ENCODE measurements at regions of chr9 and their contacts with region 1.

Region 1: GRCh38 chr9:37309136-37309535 is 113.4 kb upstream of the GRHPR start:
- DNase-seq: peak; percentile 37
- ATAC-seq: peak; percentile 76
- H3K4me3 ChIP-seq: no peak overlapping the region
- H3K27ac ChIP-seq: no peak overlapping the region
- H3K4me1 ChIP-seq: peaks cover 6% of the 10 kb centered on the region
- H3K27me3 ChIP-seq: no peaks in the 10 kb centered on the region
- CTCF ChIP-seq: peak; percentile 40
- POLR2A ChIP-seq: no peak
- RAD21 ChIP-seq: peak; percentile 56

Region 2: DNA sequence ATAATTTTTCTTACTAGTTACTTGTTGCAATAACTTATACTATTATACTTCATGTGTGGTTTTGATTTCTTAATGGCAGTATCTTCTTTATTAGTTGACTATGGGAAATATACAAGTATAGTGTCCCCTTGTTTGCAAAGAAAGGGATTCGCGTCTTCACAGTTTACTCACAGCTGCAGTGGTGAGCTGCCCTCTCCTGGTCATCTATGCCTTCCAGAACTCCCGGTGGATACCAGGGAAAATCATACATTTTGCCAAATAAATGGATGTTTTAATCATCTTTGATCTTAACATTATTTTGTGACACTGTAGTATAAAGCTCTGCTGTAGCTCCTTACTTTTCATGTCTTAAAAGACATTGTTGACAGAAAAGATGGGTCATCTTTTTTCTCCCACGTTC is 46.7 kb before region 1 on chr9:
- CTCF ChIA-PET with region 1: no interaction called
- POLR2A ChIA-PET with region 1: no interaction called
- dilution Hi-C with region 1: no loop called
- in situ Hi-C with region 1: no loop called
- intact Hi-C with region 1: loop called (anchors 5 kb)
- DNase-seq: peak; percentile 49
- ATAC-seq: 0 out of 2 replicates have a peak, but pooled peaks have one; percentile 44
- H3K4me3 ChIP-seq: no peak overlapping the region
- H3K27ac ChIP-seq: no peak overlapping the region
- H3K4me1 ChIP-seq: no peaks in the 10 kb centered on the region
- H3K27me3 ChIP-seq: no peaks in the 10 kb centered on the region
- CTCF ChIP-seq: peak; percentile 57
- POLR2A ChIP-seq: no peak
- RAD21 ChIP-seq: peak; percentile 75

Region 3: DNA sequence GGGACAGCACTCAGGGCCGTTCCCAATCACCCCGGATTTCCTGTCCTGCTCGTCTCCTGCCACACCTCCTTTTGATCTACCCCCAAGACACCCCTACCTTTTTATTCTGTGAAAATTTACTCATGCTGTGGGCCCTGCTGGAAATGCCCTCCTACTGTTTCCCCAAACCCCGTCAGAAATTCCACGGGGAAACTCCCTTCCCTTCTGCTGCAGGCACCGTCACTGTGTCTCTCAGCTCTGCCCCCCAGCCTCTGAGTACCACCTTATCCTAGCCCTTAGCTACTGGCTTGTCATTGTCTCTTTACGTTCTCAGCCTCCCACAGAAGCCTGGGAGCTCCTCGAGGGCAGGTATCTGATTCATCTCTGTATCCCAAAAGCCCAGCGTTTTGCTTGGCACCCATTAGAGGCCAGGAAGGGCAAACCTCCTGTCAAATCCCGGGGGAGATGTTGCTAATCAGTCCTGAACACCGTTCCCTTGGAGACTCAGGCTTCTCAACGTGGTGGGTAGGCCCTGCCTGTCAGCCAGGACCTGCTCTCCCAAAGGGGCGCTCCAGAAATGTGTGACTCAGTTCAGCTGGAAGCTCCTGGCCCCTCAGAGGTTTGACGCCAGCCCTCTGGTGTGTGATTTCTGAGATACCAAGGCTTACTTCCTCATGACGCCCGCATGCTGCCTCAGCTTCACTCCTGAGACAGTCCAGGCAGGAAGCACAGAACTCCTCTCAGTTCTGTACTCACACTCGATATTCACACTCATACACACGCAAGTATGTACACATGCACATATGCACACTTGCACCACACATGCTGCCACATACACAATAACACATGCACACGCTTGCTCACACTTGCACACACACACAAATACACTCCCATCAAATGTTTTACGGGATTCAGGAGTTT is 62.7 kb after region 1 on chr9:
- CTCF ChIA-PET with region 1: no interaction called
- POLR2A ChIA-PET with region 1: no interaction called
- dilution Hi-C with region 1: no loop called
- in situ Hi-C with region 1: loop called (anchors 10 kb)
- intact Hi-C with region 1: no loop called
- DNase-seq: peak; percentile 58
- ATAC-seq: peak; percentile 54
- H3K4me3 ChIP-seq: no peak overlapping the region
- H3K27ac ChIP-seq: no peak overlapping the region
- H3K4me1 ChIP-seq: 0 out of 2 replicates have a peak, but pooled peaks cover 2% of the 10 kb centered on the region
- H3K27me3 ChIP-seq: peaks cover 9% of the 10 kb centered on the region
- CTCF ChIP-seq: no peak
- POLR2A ChIP-seq: no peak
- RAD21 ChIP-seq: no peak